Endothelial cell of umbilical vein (primary cell): ENCODE measurements at regions of chr19 and their contacts with region 1.

Region 1: DNA sequence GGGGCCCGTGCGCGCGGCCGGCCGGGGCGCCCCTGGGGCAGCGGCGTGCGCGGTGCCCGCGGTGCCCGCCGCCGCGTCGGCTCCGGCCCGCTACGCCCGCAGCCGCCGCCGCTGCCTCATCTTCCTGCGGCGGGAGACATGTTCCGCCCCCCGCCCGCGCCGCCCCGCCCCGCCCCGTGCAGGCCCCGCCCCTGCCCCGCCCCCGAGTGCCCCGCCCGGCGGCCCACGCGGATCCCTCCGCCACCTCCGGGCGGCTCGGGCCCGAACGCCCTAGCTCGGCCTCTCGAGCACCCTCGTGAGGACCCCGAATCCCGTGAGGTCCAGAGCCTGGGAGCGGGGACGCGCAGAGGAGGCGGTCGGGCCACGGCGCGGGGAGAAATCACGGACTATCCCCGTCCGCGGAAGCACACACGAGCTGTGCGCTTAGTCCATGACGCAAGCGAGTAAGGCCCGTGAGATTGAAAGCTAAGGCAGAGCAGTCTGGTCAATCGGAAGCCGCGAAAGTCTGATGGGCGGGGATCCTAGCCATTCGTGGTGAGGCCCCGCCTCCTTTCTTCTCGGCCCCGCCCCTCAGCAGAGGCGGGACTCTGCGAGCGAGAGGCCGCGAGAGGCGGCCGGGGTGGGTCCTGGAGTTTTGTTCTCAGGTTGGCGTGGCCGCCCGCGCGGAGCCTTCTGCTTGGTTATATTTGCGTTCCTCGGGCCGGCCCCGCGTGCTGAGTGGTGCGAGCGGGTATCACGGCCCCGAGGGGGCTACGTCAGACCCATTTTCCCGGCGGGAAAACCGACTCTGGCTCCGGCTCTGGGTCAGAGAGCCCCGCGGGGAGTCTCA is at the start of gene TCF3:
- DNase-seq: peak; percentile 99
- H3K4me3 ChIP-seq: peak within 1 kb of the TSS; percentile 45 to 89 (median 62)
- H3K27ac ChIP-seq: peak within 1 kb of the TSS; percentile 98
- H3K4me1 ChIP-seq: peaks cover 2% of the 10 kb centered on the region
- H3K27me3 ChIP-seq: no peaks in the 10 kb centered on the region
- CTCF ChIP-seq: no peak
- POLR2A ChIP-seq: peak; percentile 28
- total RNA-seq, gene TCF3: 193 and 197 TPM in 2 replicates

Region 2: DNA sequence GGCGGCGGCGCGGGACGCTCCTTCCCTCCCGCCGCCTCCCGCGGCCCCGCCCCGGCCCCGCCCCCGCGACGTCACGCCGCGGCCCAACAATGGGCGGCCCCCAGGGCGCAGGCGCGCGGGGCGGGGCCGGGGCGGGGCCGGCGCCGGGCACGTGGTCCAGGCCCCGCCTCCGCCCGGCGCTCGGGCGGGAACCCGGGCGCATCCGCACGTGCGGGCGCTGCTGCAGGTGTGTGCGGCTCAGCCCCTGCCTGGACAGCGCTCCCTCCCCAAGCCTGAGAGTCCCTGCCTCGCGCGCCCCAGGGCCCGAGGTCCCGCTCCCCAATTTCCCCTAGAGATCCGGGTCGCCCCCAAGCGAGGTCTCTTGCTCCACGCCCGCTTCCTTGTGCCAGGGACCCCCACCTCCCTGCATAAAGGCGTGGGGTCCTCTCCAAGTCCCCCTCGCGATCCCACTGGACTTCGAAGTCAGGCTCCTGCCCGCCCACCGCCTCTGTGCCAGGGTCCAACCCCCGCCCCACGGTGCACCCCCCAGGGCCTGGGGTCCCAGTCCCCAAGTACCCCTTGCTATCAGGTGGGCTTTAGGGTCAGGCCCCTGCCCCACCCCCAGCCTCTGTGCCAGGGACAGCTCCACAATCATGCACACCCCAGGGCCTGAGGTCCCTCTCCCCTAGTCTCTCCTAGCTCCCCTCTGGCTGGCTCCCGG is 84.2 kb before region 1 on chr19 and contains the start of gene MEX3D:
- CTCF ChIA-PET with region 1: no interaction called
- POLR2A ChIA-PET with region 1: no interaction called
- dilution Hi-C with region 1: no loop called
- intact Hi-C with region 1: loop called (anchors 2 kb)
- DNase-seq: peak; percentile 23
- H3K4me3 ChIP-seq: peak within 1 kb of the TSS; percentile 81 to 99 (median 95)
- H3K27ac ChIP-seq: peak within 1 kb of the TSS; percentile 96
- H3K4me1 ChIP-seq: peaks cover 8% of the 10 kb centered on the region
- H3K27me3 ChIP-seq: peaks cover 0 to 6% of the 10 kb centered on the region in 2 experiments
- CTCF ChIP-seq: no peak
- POLR2A ChIP-seq: no peak
- total RNA-seq, gene MEX3D: 96.7 and 98.5 TPM in 2 replicates

Region 3: DNA sequence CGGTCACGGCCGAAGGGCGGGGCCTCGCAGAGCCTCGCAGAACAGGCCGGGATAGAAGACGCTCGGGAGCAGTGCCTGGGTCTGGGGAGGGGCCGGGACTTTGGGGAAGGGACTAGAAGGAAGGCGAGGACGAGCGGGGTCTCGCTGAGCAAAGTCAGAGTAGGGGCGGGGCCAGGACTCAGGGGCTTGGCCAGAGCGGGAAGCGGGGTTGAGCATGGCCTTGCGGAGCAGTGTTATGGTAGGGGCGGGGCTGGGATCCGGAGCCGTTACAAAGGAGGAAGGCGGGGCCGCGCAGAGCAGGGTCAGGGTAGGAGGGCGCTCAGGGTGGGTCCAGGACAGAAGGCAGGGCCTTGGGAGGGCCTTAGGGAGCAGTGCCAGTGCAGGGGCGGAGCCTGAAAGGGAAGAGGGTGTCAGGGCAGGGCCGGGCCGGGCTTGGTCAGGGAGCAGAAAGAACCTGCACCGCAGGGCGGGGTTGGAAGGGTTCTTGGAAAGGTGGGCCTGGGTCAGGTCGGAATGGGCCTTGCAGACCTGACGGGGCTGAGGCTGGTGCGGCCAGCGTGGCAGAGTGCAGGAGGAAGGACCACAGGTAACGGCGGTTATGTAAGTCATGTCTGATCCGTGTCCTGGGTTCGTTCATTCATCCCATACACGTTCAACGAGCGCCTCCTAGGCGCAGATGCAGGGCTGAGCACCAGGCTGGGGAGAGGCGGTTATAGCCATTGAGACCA is 159.9 kb after region 1 on chr19:
- CTCF ChIA-PET with region 1: no interaction called
- POLR2A ChIA-PET with region 1: no interaction called
- dilution Hi-C with region 1: no loop called
- intact Hi-C with region 1: loop called (anchors 2 kb)
- DNase-seq: peak; percentile 88
- H3K4me3 ChIP-seq: peak overlapping the region; percentile 36 to 66 (median 39)
- H3K27ac ChIP-seq: peak overlapping the region; percentile 48
- H3K4me1 ChIP-seq: peaks cover 13% of the 10 kb centered on the region
- H3K27me3 ChIP-seq: no peaks in the 10 kb centered on the region
- CTCF ChIP-seq: peak; percentile 47 to 62
- POLR2A ChIP-seq: no peak